CD8-positive, alpha-beta memory T cell (primary cell): ENCODE measurements at regions of chr3 and their contacts with region 1.

Region 1: DNA sequence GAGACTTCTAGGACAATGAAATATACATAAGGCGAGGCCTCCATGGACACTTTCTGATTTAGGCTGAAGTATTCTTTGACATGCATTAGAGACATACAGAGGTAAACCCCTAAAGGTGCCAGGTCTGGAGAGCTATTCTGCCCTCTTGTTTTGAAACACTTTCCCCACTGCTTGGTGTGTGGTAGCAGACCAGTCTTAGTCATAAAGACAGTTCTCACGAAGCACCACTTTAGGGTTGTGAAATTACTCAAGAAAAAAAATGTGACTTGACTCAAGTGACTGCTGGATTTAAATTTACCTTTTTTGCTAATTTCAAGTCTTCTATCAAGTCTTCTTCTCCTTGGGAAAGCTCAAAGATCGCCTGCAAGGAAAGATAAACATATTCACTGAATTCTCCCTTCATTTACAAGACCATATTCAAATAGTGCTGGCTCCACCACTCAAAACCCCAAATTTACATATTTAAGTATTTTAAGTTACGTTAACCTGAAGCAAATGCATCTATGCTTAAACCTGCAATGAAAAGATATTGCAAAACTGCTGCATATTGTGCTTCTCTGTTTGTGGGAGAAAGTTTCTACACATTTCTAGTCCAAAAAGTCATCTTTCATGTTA is 48.4 kb downstream of the ARHGEF3 start:
- DNase-seq: peak in 1 of 5 donors; percentile 52
- H3K4me3 ChIP-seq: no peak overlapping the region
- H3K4me3 Mint-ChIP-seq: peak overlapping the region; percentile 72 to 95 (median 91)
- H3K27ac ChIP-seq: no peak overlapping the region
- H3K27ac Mint-ChIP-seq: peak overlapping the region; percentile 87 to 99 (median 96)
- H3K4me1 ChIP-seq: peaks cover 61% of the 10 kb centered on the region
- H3K4me1 Mint-ChIP-seq: peaks cover 75 to 81% (median 79%) of the 10 kb centered on the region in 3 donors
- H3K27me3 ChIP-seq: no peaks in the 10 kb centered on the region
- H3K27me3 Mint-ChIP-seq: no peaks in the 10 kb centered on the region

Region 2: DNA sequence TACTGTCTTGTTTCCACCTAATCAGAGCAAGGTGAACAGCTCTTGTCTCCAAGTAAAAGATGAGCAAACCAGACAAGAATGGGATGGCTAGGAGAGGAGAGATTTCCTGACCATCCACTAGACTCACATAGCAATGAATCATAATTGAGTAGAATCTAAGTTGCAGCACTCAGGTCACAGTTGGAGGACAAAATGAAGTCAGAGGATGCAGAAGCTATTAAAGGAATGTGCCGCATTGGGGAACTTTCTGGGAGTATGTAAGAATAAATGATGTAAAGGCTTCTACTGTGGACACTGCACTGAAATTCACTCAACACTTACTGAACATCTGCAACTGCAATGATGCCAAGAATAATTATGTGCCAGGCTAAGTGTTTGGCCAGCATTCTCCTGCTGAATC is 1048.8 kb before region 1 on chr3:
- CTCF ChIA-PET with region 1: no interaction called
- POLR2A ChIA-PET with region 1: no interaction called
- DNase-seq: no peak
- H3K4me3 ChIP-seq: no peak overlapping the region
- H3K4me3 Mint-ChIP-seq: no peak overlapping the region
- H3K27ac ChIP-seq: no peak overlapping the region
- H3K27ac Mint-ChIP-seq: no peak overlapping the region
- H3K4me1 ChIP-seq: no peaks in the 10 kb centered on the region
- H3K4me1 Mint-ChIP-seq: no peaks in the 10 kb centered on the region
- H3K27me3 ChIP-seq: no peaks in the 10 kb centered on the region
- H3K27me3 Mint-ChIP-seq: peaks cover 0 to 2% of the 10 kb centered on the region in 2 donors

Region 3: GRCh38 chr3:56783644-56784447 is 30.5 kb after region 1 on chr3:
- CTCF ChIA-PET with region 1: interaction called, 8 read pairs
- POLR2A ChIA-PET with region 1: interaction called, 17 read pairs
- DNase-seq: peak; percentile 40 to 88 (median 82)
- H3K4me3 ChIP-seq: peak overlapping the region; percentile 51
- H3K4me3 Mint-ChIP-seq: peak overlapping the region; percentile 43 to 87 (median 82)
- H3K27ac ChIP-seq: peak overlapping the region; percentile 55
- H3K27ac Mint-ChIP-seq: peak overlapping the region; percentile 87 to 99 (median 95)
- H3K4me1 ChIP-seq: peaks cover 99% of the 10 kb centered on the region
- H3K4me1 Mint-ChIP-seq: peaks cover 96 to 98% (median 98%) of the 10 kb centered on the region in 3 donors
- H3K27me3 ChIP-seq: no peaks in the 10 kb centered on the region
- H3K27me3 Mint-ChIP-seq: no peaks in the 10 kb centered on the region

Region 4: DNA sequence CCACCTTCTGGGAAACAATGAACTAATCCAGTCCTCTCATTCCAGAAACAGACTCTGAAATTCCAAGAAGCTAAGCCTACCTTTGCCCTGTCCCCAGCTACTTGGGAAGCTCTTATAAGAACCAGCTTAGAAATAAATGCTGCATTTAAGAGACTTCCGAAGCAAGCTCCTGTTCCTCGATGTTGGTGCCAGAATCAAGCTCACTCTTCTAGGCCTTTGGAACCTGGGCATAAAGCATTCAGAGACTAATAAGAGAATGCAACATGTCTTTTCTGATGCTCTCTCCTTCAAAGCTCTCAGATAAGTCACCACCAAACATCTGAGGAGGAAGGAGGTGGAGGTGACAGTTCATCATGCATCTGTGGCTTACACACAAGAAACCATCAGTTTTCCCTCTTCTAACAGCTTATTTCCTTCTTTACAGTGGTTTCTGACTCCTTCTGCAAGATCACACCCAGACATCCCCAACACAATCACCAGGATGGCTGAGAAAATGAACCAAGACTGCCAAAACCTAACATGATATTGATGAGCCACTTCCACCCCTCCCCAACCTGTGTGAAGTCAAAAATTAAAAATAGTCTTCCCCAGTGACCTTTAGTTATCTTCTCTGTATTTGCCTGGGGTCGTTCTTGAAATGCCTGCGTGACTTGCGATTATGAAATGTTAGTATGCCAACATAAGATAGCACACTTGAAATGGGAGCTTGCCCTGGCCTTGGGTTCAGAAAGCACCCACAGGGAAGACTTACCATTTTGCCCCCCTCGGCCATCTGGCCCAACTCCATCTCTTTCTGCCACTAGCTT is 36.9 kb after region 1 on chr3:
- CTCF ChIA-PET with region 1: interaction called, 127 read pairs
- POLR2A ChIA-PET with region 1: interaction called, 7 read pairs
- DNase-seq: peak in 3 of 5 donors; percentile 60 to 66 (median 64)
- H3K4me3 ChIP-seq: peak overlapping the region; percentile 0
- H3K4me3 Mint-ChIP-seq: peak overlapping the region; percentile 60 to 86 (median 70)
- H3K27ac ChIP-seq: no peak overlapping the region
- H3K27ac Mint-ChIP-seq: peak overlapping the region; percentile 84 to 98 (median 95)
- H3K4me1 ChIP-seq: peaks cover 88% of the 10 kb centered on the region
- H3K4me1 Mint-ChIP-seq: peaks cover 85 to 96% (median 93%) of the 10 kb centered on the region in 3 donors
- H3K27me3 ChIP-seq: no peaks in the 10 kb centered on the region
- H3K27me3 Mint-ChIP-seq: no peaks in the 10 kb centered on the region